ENCODE measurements at regions of chr9 and their contacts with region 1.

Region 1: DNA sequence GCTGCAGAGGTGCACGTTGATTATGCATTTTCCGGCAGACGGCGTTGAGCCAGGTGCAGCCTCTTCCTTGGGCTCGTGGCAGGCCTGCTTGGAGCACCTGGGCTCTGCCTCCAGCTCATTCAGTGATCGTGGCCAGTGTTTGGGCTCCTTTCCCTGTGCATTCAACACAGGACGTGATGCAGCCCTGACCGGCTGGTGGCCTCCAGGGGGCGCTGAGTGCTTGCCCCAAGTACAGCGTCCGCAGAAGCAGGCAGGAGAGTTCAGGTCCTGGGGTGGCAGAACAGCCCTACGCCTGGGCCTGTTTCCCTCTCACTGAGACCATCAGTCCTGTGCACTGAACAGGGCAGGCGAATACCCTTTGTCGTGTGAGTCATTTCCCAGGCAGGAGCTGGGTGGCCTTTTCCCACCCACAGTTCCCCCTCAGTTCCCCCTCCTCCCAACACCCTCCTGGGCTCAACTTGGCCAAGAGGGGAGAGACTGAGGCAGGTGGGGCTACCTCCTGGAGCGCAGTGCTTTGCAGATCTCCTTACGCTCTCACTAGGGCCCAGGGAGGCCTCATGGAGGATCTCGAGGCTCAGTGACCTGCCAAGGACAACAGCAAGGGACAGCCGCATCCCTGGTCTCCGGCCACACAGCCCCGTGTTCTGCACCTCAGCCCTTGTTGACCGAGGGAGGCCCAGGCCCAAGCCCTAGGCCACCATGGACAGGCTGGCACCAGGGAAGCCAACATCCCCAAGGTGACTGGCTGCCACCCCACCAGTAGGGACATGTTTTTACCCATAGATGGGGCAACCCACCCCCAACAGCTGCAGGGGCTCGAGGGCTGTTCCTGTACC is 52.9 kb downstream of the LRSAM1 start:
- DNase-seq: peak; percentile 85 to 95 (median 92)
- H3K4me3 ChIP-seq: no peak overlapping the region
- H3K27ac ChIP-seq: peak overlapping the region; percentile 72 to 93 (median 76)
- H3K4me1 ChIP-seq: peaks cover 25 to 45% of the 10 kb centered on the region in 2 donors
- H3K27me3 ChIP-seq: no peaks in the 10 kb centered on the region
- CTCF ChIP-seq: peak; percentile 78 to 95 (median 90)
- POLR2A ChIP-seq: no peak

Region 2: GRCh38 chr9:127614961-127615360 is 110.8 kb after region 1 on chr9:
- intact Hi-C with region 1: no loop called
- DNase-seq: peak in 6 of 7 donors; percentile 25 to 75 (median 52)
- H3K4me3 ChIP-seq: no peak overlapping the region
- H3K27ac ChIP-seq: peak overlapping the region in 1 of 5 donors; percentile 94
- H3K4me1 ChIP-seq: peaks cover 0 to 26% of the 10 kb centered on the region in 2 donors
- H3K27me3 ChIP-seq: no peaks in the 10 kb centered on the region
- CTCF ChIP-seq: no peak
- POLR2A ChIP-seq: no peak

Region 3: GRCh38 chr9:127734747-127735529 is 230.8 kb after region 1 on chr9 and contains the start of gene TOR2A:
- intact Hi-C with region 1: loop called (anchors 5 to 10 kb)
- DNase-seq: peak; percentile 97 to 99 (median 98)
- H3K4me3 ChIP-seq: peak within 1 kb of the TSS; percentile 18 to 82 (median 54)
- H3K27ac ChIP-seq: peak within 1 kb of the TSS; percentile 71 to 95 (median 89)
- H3K4me1 ChIP-seq: peaks cover 6 to 13% of the 10 kb centered on the region in 2 donors
- H3K27me3 ChIP-seq: no peaks in the 10 kb centered on the region
- CTCF ChIP-seq: peak; percentile 92 to 99 (median 98)
- POLR2A ChIP-seq: peak; percentile 88 to 94
- total RNA-seq, gene TOR2A: 10.8 to 30.6 (median 17.9) TPM

Region 4: DNA sequence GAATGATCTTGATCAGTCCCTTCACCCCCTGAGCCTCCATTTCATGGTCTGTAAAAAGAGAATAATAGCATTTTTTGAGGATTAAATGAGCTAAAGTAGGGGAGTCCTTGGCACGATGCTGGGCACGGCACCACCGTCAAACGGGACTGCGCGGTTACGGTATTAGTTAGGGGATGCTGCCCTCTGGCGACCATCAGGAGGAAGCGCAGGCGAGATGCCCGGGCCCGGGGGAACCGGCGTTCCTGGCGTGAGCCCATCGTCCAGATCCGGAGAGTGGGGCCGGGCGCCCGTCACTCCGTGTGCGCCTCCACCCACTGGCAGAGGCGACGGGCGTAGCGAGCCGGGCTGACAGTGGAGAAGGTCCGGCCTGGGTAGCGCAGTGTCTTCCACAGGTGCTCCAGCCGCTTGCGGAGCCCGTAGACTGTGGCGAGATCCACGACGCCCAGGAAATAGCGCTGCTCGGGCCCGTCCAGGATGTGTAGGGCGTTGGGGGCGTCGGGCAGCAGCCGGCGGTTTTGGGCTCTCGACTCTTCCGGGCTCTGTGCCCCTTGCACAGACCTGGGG is 417.5 kb after region 1 on chr9:
- intact Hi-C with region 1: loop called in 1 of 2 experiments (anchors 10 kb)
- DNase-seq: peak; percentile 61 to 87 (median 76)
- H3K4me3 ChIP-seq: no peak overlapping the region
- H3K27ac ChIP-seq: no peak overlapping the region
- H3K4me1 ChIP-seq: peaks cover 13 to 37% of the 10 kb centered on the region in 2 donors
- H3K27me3 ChIP-seq: peaks cover 13% of the 10 kb centered on the region
- CTCF ChIP-seq: peak; percentile 92 to 97 (median 95)
- POLR2A ChIP-seq: no peak

Measured in adrenal gland (tissue), 19 donors.